GM10248 (cell line): ENCODE measurements at regions of chr7 and their contacts with region 1.

Region 1: GRCh38 chr7:101077303-101078089 is 7.8 kb upstream of the TRIM56 start:
- DNase-seq: peak; percentile 87
- CTCF ChIP-seq: peak; percentile 99

Region 2: DNA sequence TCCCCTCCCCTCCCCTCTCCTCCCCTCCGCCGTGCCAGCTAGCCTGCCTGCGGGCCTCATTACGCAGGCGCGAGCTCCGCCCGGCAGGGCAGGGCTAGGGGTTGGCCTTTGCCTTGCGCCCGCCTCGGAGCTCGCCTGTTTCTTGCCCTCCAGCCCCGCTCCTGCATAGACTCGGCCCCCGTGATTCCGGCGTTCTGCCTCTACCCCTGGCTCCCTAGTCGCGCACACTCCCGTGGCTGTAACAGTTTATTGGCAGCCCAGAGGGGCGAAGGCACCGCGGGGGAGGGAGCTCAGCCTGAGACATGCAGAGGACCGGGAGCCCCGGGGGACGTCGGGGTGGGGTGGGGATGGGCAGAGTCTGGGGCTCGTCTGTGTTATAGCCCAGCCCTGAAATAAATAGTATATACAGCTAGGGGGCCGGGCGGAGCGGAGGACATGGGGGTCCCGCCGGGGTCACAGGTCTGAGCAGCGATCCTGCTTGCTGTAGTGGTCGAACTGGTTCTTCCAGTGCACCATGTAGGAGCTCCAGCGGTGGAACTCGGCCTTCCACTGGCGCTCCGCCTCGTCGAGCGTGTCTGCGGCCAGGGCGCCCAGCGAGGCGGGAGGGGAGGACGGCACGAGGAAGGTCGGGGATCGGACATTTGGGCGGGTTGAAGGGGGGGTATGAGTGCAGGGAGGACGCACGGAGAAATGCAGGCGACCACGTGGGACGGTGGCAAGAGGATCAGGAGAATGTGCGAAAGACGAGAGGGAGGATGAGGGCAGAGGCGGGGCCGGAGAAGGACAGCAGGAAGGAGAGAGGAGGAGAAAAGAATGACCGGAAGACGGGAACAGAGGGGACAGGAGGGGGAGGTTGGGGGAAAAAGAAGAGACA is 187.5 kb before region 1 on chr7:
- CTCF ChIA-PET with region 1: interaction called, 11 read pairs
- POLR2A ChIA-PET with region 1: no interaction called
- DNase-seq: peak; percentile 99
- CTCF ChIP-seq: no peak

Region 3: DNA sequence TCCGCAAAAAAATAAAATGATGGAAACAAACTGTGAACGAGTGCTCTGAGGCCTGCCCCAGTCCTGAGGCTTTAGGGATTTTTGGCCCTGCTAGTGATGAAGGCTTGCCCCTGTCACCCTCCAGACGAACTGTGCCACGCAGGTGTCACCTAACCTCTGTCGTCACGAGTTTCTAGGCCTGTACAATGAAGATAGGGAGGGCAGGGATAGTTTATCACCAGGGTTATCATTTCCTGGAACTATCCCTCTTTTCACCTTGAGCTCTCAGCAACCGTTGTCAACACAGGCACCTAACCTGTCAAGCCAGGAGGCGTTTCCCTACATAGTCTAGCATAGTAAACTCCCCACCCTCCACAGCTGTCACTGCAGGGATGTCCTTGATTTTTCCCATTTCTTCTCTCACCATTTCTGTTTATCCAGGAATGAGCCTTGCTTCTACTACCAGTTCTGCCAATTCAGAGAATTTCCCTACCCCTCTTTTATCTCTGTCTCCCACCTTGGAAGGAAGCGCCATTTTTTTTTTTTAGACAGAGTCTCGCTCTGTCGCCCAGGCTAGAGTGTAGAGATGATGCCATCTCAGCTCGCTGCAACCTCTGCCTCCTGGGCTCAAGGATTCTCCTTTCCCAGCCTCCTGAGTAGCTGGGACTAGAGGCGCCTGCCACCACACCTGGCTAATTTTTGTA is 179.6 kb before region 1 on chr7:
- CTCF ChIA-PET with region 1: interaction called, 11 read pairs
- POLR2A ChIA-PET with region 1: interaction called, 3 read pairs
- DNase-seq: no peak
- CTCF ChIP-seq: no peak

Region 4: DNA sequence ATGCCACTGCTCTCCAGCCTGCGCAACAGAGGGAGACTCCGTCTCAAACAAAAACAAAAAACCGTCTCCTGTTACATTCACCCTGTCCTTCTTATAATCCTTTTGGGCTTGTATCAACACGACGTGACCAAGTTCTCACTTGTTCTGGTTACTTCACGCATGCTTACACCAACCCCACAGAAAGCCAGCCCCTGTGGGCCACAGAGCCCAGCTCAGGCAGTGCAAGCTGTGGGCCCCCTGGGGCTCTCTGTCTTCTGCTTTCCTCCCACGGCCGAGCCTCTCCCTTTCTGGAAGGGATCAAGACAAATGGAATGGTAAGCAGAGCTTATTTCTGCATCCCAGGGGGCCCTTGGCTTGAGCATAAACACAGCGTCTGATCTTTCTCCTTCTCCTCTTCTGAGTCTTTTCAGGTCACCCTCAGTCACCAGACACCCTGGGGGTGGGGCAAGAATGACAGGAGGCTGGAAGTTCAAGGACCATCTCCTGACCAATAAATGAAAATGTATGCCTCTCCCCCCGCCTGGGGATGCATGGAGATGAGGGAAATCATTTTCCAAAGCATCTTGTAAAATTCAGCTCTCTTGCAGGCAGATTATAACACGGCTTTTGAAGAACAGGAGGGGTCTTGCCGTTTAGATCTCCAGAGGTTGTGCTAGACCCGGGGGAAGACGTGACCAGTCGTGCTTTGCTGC is 11.2 kb before region 1 on chr7:
- CTCF ChIA-PET with region 1: interaction called, 11 read pairs
- POLR2A ChIA-PET with region 1: no interaction called
- DNase-seq: no peak
- CTCF ChIP-seq: no peak

Region 5: DNA sequence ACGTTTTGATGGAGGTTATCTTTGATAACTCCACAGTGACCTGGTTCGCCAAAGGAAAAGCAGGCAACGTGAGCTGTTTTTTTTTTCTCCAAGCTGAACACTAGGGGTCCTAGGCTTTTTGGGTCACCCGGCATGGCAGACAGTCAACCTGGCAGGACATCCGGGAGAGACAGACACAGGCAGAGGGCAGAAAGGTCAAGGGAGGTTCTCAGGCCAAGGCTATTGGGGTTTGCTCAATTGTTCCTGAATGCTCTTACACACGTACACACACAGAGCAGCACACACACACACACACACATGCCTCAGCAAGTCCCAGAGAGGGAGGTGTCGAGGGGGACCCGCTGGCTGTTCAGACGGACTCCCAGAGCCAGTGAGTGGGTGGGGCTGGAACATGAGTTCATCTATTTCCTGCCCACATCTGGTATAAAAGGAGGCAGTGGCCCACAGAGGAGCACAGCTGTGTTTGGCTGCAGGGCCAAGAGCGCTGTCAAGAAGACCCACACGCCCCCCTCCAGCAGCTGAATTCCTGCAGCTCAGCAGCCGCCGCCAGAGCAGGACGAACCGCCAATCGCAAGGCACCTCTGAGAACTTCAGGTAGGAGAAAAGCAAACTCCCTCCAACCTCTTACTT is 49.3 kb after region 1 on chr7 and contains the start of gene SERPINE1:
- CTCF ChIA-PET with region 1: interaction called, 13 read pairs
- POLR2A ChIA-PET with region 1: no interaction called
- DNase-seq: peak; percentile 84
- CTCF ChIP-seq: no peak